MCF 10A (cell line): ENCODE measurements at regions of chr20 and their contacts with region 1.

Region 1: GRCh38 chr20:13546497-13547131 is 92.1 kb downstream of the TASP1 start:
- DNase-seq: peak; percentile 86
- H3K4me3 Mint-ChIP-seq: no peak overlapping the region
- H3K27ac Mint-ChIP-seq: peak overlapping the region; percentile 4
- H3K4me1 Mint-ChIP-seq: peaks cover 3% of the 10 kb centered on the region
- H3K27me3 Mint-ChIP-seq: no peaks in the 10 kb centered on the region
- CTCF ChIP-seq: peak; percentile 67

Region 2: GRCh38 chr20:13111249-13111911 is 435.2 kb before region 1 on chr20:
- CTCF ChIA-PET with region 1: interaction called, 255 read pairs
- POLR2A ChIA-PET with region 1: no interaction called
- intact Hi-C with region 1: no loop called
- DNase-seq: no peak
- H3K4me3 Mint-ChIP-seq: no peak overlapping the region
- H3K27ac Mint-ChIP-seq: no peak overlapping the region
- H3K4me1 Mint-ChIP-seq: no peaks in the 10 kb centered on the region
- H3K27me3 Mint-ChIP-seq: no peaks in the 10 kb centered on the region
- CTCF ChIP-seq: no peak

Region 3: GRCh38 chr20:13302647-13303450 is 243.8 kb before region 1 on chr20:
- CTCF ChIA-PET with region 1: interaction called, 42 read pairs
- POLR2A ChIA-PET with region 1: no interaction called
- intact Hi-C with region 1: no loop called
- DNase-seq: peak; percentile 61
- H3K4me3 Mint-ChIP-seq: no peak overlapping the region
- H3K27ac Mint-ChIP-seq: no peak overlapping the region
- H3K4me1 Mint-ChIP-seq: no peaks in the 10 kb centered on the region
- H3K27me3 Mint-ChIP-seq: no peaks in the 10 kb centered on the region
- CTCF ChIP-seq: peak; percentile 68

Region 4: GRCh38 chr20:13396022-13396421 is 150.6 kb before region 1 on chr20:
- CTCF ChIA-PET with region 1: interaction called, 24 read pairs
- POLR2A ChIA-PET with region 1: no interaction called
- intact Hi-C with region 1: no loop called
- DNase-seq: no peak
- H3K4me3 Mint-ChIP-seq: no peak overlapping the region
- H3K27ac Mint-ChIP-seq: no peak overlapping the region
- H3K4me1 Mint-ChIP-seq: no peaks in the 10 kb centered on the region
- H3K27me3 Mint-ChIP-seq: no peaks in the 10 kb centered on the region
- CTCF ChIP-seq: no peak

Region 5: DNA sequence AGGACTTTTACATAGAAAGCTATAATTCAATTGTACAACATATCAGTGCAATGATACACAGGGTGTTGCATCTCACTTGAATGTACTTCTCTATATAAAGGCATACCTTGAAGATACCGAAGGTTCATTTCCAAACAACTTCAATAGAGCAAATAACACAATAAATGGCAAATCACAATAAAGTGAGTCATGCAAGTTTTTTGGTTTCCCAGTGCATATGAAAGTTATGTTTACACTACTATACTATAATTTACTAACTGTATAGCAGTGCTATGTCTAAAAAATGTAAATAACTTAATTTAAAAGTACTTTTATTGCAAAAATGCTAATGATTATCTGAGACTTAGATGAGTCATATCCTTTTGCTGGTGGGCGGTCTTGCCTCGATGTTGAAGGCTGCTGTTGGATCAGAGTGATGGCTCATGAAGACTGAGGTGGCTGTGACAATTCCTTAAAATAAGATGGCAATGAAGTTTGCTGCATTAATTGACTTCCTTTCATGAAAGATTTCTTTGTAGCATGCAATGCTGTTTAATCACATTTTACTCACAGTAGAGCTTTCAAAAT is 96.7 kb before region 1 on chr20:
- CTCF ChIA-PET with region 1: interaction called, 41 read pairs
- POLR2A ChIA-PET with region 1: no interaction called
- intact Hi-C with region 1: no loop called
- DNase-seq: no peak
- H3K4me3 Mint-ChIP-seq: no peak overlapping the region
- H3K27ac Mint-ChIP-seq: no peak overlapping the region
- H3K4me1 Mint-ChIP-seq: no peaks in the 10 kb centered on the region
- H3K27me3 Mint-ChIP-seq: no peaks in the 10 kb centered on the region
- CTCF ChIP-seq: no peak

Region 6: GRCh38 chr20:13525225-13525940 is 21.2 kb before region 1 on chr20:
- CTCF ChIA-PET with region 1: interaction called, 88 read pairs
- POLR2A ChIA-PET with region 1: no interaction called
- intact Hi-C with region 1: no loop called
- DNase-seq: peak; percentile 83
- H3K4me3 Mint-ChIP-seq: no peak overlapping the region
- H3K27ac Mint-ChIP-seq: peak overlapping the region; percentile 67
- H3K4me1 Mint-ChIP-seq: peaks cover 17% of the 10 kb centered on the region
- H3K27me3 Mint-ChIP-seq: no peaks in the 10 kb centered on the region
- CTCF ChIP-seq: no peak